ENCODE measurements at regions of chr1 and their contacts with region 1.

Region 1: DNA sequence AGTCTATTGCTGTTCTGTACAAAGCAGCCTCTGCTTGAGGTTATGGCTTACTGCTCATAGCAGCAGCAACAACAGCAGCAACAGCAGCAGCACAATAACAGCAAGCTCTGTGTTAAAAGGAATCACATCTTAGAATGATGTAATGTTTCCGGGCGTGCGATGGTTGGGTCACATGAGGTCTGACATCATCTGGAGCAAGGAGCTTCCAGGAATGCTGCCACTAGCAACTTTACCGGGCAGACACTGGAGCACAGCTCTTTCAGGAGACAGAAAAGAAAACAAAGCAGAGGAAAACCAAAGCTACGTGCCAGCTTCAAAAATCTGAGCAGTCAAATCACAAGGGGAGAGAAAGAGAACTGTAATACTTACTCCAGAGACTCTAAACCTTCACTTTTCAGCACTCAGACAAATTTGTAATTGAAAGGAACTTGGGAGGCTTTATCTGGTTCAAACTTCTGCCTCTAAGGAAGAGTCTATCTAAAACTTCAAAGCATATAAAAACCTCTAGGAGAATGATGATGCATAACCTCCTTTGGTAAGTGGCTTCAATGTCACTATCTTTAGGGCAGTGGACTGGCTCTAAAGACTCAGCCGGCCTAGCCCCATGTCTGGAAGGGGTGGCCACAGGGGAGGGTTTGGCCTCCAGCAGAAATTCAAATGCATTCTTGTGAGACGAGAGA is 28.3 kb upstream of the RAB3GAP2 start:
- DNase-seq: peak; percentile 59 to 60
- H3K4me3 ChIP-seq: no peak overlapping the region
- H3K27ac ChIP-seq: peak overlapping the region; percentile 38
- H3K4me1 ChIP-seq: peaks cover 11% of the 10 kb centered on the region
- H3K27me3 ChIP-seq: no peaks in the 10 kb centered on the region
- CTCF ChIP-seq: no peak

Region 2: GRCh38 chr1:220089650-220090556 is 210.7 kb before region 1 on chr1 and contains the start of gene BPNT1:
- CTCF ChIA-PET with region 1: interaction called, 10 read pairs
- POLR2A ChIA-PET with region 1: no interaction called
- intact Hi-C with region 1: no loop called
- DNase-seq: peak; percentile 90 to 98
- H3K4me3 ChIP-seq: peak within 1 kb of the TSS; percentile 88
- H3K27ac ChIP-seq: peak within 1 kb of the TSS; percentile 21; the same call in 1 of the 2 replicates
- H3K4me1 ChIP-seq: peaks cover 7% of the 10 kb centered on the region
- H3K27me3 ChIP-seq: no peaks in the 10 kb centered on the region
- CTCF ChIP-seq: 0 out of 2 replicates have a peak, but pooled peaks have one; percentile 17
- total RNA-seq, gene BPNT1: 41.5 and 50.8 TPM in 2 replicates

Region 3: GRCh38 chr1:220182656-220183055 is 117.9 kb before region 1 on chr1:
- CTCF ChIA-PET with region 1: interaction called, 11 read pairs
- POLR2A ChIA-PET with region 1: no interaction called
- intact Hi-C with region 1: no loop called
- DNase-seq: no peak
- H3K4me3 ChIP-seq: no peak overlapping the region
- H3K27ac ChIP-seq: no peak overlapping the region
- H3K4me1 ChIP-seq: no peaks in the 10 kb centered on the region
- H3K27me3 ChIP-seq: no peaks in the 10 kb centered on the region
- CTCF ChIP-seq: no peak

Region 4: GRCh38 chr1:220290140-220290761 is 10.3 kb before region 1 on chr1:
- CTCF ChIA-PET with region 1: no interaction called
- POLR2A ChIA-PET with region 1: no interaction called
- intact Hi-C with region 1: no loop called
- DNase-seq: no peak
- H3K4me3 ChIP-seq: no peak overlapping the region
- H3K27ac ChIP-seq: no peak overlapping the region
- H3K4me1 ChIP-seq: no peaks in the 10 kb centered on the region
- H3K27me3 ChIP-seq: no peaks in the 10 kb centered on the region
- CTCF ChIP-seq: no peak

Region 5: GRCh38 chr1:220336391-220337031 is 35.9 kb after region 1 on chr1:
- CTCF ChIA-PET with region 1: interaction called, 7 read pairs
- POLR2A ChIA-PET with region 1: interaction called, 6 read pairs
- intact Hi-C with region 1: loop called (anchors 1 kb)
- DNase-seq: no peak
- H3K4me3 ChIP-seq: no peak overlapping the region
- H3K27ac ChIP-seq: peak overlapping the region; percentile 49
- H3K4me1 ChIP-seq: peaks cover 33% of the 10 kb centered on the region
- H3K27me3 ChIP-seq: no peaks in the 10 kb centered on the region
- CTCF ChIP-seq: no peak

Region 6: GRCh38 chr1:220398238-220398637 is 97.7 kb after region 1 on chr1:
- CTCF ChIA-PET with region 1: no interaction called
- POLR2A ChIA-PET with region 1: no interaction called
- intact Hi-C with region 1: no loop called
- DNase-seq: no peak
- H3K4me3 ChIP-seq: no peak overlapping the region
- H3K27ac ChIP-seq: no peak overlapping the region
- H3K4me1 ChIP-seq: peaks cover 20% of the 10 kb centered on the region
- H3K27me3 ChIP-seq: no peaks in the 10 kb centered on the region
- CTCF ChIP-seq: no peak

Measured in PC-9 (cell line).